ENCODE measurements at regions of chr15 and their contacts with region 1.

Region 1: GRCh38 chr15:43029476-43029875 is 76.4 kb downstream of the UBR1 start:
- DNase-seq: no peak
- ATAC-seq: no peak
- H3K4me3 ChIP-seq: no peak overlapping the region
- H3K27ac ChIP-seq: no peak overlapping the region
- H3K4me1 ChIP-seq: no peaks in the 10 kb centered on the region
- H3K27me3 ChIP-seq: no peaks in the 10 kb centered on the region
- CTCF ChIP-seq: no peak
- POLR2A ChIP-seq: no peak
- RAD21 ChIP-seq: no peak

Region 2: GRCh38 chr15:42704492-42704926 is 325.0 kb before region 1 on chr15:
- CTCF ChIA-PET with region 1: no interaction called
- POLR2A ChIA-PET with region 1: no interaction called
- dilution Hi-C with region 1: no loop called
- in situ Hi-C with region 1: no loop called
- intact Hi-C with region 1: loop called (anchors 10 kb)
- DNase-seq: peak; percentile 73
- ATAC-seq: peak; percentile 100
- H3K4me3 ChIP-seq: no peak overlapping the region
- H3K27ac ChIP-seq: no peak overlapping the region
- H3K4me1 ChIP-seq: no peaks in the 10 kb centered on the region
- H3K27me3 ChIP-seq: no peaks in the 10 kb centered on the region
- CTCF ChIP-seq: peak; percentile 86
- POLR2A ChIP-seq: no peak
- RAD21 ChIP-seq: peak; percentile 94

Region 3: GRCh38 chr15:42933886-42934667 is 95.4 kb before region 1 on chr15:
- CTCF ChIA-PET with region 1: no interaction called
- POLR2A ChIA-PET with region 1: no interaction called
- dilution Hi-C with region 1: no loop called
- in situ Hi-C with region 1: no loop called
- intact Hi-C with region 1: no loop called
- DNase-seq: peak; percentile 53
- ATAC-seq: no peak; the same call in 1 of the 2 replicates
- H3K4me3 ChIP-seq: no peak overlapping the region
- H3K27ac ChIP-seq: no peak overlapping the region
- H3K4me1 ChIP-seq: no peaks in the 10 kb centered on the region
- H3K27me3 ChIP-seq: no peaks in the 10 kb centered on the region
- CTCF ChIP-seq: no peak
- POLR2A ChIP-seq: no peak
- RAD21 ChIP-seq: no peak

Region 4: DNA sequence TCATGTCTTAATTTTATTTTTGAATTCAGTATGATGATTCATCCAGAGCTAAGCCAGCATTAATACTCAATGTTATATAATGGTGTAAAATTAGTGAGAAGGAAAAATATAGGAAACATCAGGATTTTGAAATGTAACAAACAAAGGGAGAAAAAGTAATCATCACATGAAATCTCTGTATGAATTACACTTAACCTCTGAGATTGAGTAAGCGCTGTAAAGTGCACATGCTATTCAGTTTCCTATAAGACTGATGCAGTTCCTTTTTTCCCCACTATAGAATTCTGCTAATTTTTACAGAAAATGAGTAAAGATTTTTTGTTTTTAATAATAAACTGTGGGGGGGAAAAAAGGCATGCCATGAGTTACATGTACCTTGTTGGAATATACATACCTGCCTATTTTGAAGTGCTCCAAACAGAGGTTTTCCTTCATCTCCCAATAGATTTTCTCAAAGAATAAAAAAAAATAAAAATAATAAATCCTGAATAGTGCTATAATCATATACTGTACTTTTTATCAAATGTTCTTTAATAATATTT is 44.9 kb before region 1 on chr15:
- CTCF ChIA-PET with region 1: no interaction called
- POLR2A ChIA-PET with region 1: no interaction called
- dilution Hi-C with region 1: no loop called
- in situ Hi-C with region 1: no loop called
- intact Hi-C with region 1: loop called (anchors 5 kb)
- DNase-seq: no peak
- ATAC-seq: no peak
- H3K4me3 ChIP-seq: no peak overlapping the region
- H3K27ac ChIP-seq: no peak overlapping the region
- H3K4me1 ChIP-seq: no peaks in the 10 kb centered on the region
- H3K27me3 ChIP-seq: no peaks in the 10 kb centered on the region
- CTCF ChIP-seq: no peak
- POLR2A ChIP-seq: no peak
- RAD21 ChIP-seq: no peak

Region 5: DNA sequence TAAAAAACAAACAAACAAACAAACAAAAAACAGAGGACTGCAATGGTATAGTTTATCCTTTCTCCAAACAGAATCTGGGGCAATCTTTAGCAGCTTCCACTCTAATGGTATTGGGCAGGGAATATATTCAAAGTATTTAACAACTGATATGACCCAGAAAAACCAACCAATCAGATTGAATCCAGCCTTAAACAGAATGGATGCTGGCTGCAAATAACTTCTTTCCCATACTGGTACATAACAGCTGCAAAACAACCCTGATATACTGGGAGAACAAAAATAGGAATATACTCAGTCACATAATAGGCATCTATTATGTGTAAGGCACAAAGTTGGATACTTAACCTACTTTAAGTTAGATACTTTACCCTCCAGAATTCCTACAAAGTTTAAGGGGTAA is 27.2 kb after region 1 on chr15:
- CTCF ChIA-PET with region 1: no interaction called
- POLR2A ChIA-PET with region 1: no interaction called
- dilution Hi-C with region 1: no loop called
- in situ Hi-C with region 1: no loop called
- intact Hi-C with region 1: loop called (anchors 5 kb)
- DNase-seq: no peak
- ATAC-seq: no peak
- H3K4me3 ChIP-seq: no peak overlapping the region
- H3K27ac ChIP-seq: no peak overlapping the region
- H3K4me1 ChIP-seq: no peaks in the 10 kb centered on the region
- H3K27me3 ChIP-seq: no peaks in the 10 kb centered on the region
- CTCF ChIP-seq: no peak
- POLR2A ChIP-seq: no peak
- RAD21 ChIP-seq: no peak

Region 6: DNA sequence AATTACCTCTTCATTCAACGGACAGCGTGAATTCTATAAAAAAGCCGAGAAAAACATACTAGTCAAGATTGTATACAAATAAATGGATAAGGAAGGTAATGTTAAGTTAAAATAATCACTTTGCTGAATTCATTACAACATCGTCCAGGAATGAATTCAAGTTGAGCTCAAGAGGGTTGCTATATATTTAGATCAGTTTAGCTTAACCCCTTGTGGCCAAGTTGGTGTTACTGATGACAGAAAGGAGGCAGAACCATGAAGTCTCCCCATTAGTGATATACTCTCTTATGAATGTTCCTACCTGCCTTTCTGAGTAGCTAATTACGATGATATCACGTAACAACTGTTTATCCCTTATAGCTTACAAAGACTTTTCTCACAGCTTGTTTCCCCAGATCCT is 41.4 kb after region 1 on chr15:
- CTCF ChIA-PET with region 1: no interaction called
- POLR2A ChIA-PET with region 1: no interaction called
- dilution Hi-C with region 1: no loop called
- in situ Hi-C with region 1: no loop called
- intact Hi-C with region 1: loop called (anchors 5 kb)
- DNase-seq: no peak
- ATAC-seq: no peak
- H3K4me3 ChIP-seq: no peak overlapping the region
- H3K27ac ChIP-seq: no peak overlapping the region
- H3K4me1 ChIP-seq: no peaks in the 10 kb centered on the region
- H3K27me3 ChIP-seq: no peaks in the 10 kb centered on the region
- CTCF ChIP-seq: no peak
- POLR2A ChIP-seq: no peak
- RAD21 ChIP-seq: no peak

Region 7: GRCh38 chr15:43440721-43441281 is 411.3 kb after region 1 on chr15:
- CTCF ChIA-PET with region 1: no interaction called
- POLR2A ChIA-PET with region 1: no interaction called
- dilution Hi-C with region 1: no loop called
- in situ Hi-C with region 1: no loop called
- intact Hi-C with region 1: no loop called
- DNase-seq: peak; percentile 99
- ATAC-seq: peak; percentile 96
- H3K4me3 ChIP-seq: no peak overlapping the region
- H3K27ac ChIP-seq: peak overlapping the region; percentile 83; the same call in 1 of the 2 replicates
- H3K4me1 ChIP-seq: peaks cover 4% of the 10 kb centered on the region
- H3K27me3 ChIP-seq: no peaks in the 10 kb centered on the region
- CTCF ChIP-seq: peak; percentile 84
- POLR2A ChIP-seq: no peak; the same call in 1 of the 2 replicates
- RAD21 ChIP-seq: peak; percentile 89

Measured in IMR-90 (cell line).